ENCODE measurements at regions of chr10 and their contacts with region 1.

Region 1: GRCh38 chr10:120423431-120424197 is 33.4 kb upstream of the PLPP4 start:
- DNase-seq: no peak
- ATAC-seq: peak; percentile 88
- H3K4me3 ChIP-seq: no peak overlapping the region
- H3K27ac ChIP-seq: no peak overlapping the region
- H3K4me1 ChIP-seq: no peaks in the 10 kb centered on the region
- H3K27me3 ChIP-seq: peaks cover 0 to 3% of the 10 kb centered on the region in 2 experiments; a peak in 2 of 4 replicates
- CTCF ChIP-seq: peak; percentile 88 to 95 (median 91)
- EP300 ChIP-seq: no peak
- POLR2A ChIP-seq: no peak
- RAD21 ChIP-seq: peak; percentile 92

Region 2: DNA sequence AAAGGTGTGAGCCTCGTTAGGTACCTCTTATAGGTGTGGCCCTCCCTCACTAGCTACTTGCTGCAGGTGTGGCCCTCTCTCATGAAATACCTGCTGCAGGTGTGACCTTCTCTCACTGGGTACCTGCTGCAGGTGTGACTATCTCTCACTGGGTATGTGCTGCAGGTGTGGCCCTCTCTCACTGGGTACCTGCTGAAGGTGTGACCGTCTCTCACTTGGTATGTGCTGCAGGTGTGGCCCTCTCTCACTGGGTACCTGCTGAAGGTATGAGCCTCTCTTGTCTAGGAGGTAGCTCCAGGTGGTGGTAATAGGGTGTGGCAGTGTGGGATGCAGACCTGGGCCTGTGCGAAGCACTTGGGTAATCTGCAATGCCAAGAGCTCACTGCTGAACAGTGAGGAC is 137.3 kb before region 1 on chr10:
- CTCF ChIA-PET with region 1: no interaction called
- POLR2A ChIA-PET with region 1: no interaction called
- RAD21 ChIA-PET with region 1: no interaction called
- SMC1A ChIA-PET with region 1: no interaction called
- in situ Hi-C with region 1: no loop called
- intact Hi-C with region 1: no loop called
- DNase-seq: no peak
- ATAC-seq: no peak
- H3K4me3 ChIP-seq: no peak overlapping the region
- H3K27ac ChIP-seq: no peak overlapping the region
- H3K4me1 ChIP-seq: no peaks in the 10 kb centered on the region
- H3K27me3 ChIP-seq: no peaks in the 10 kb centered on the region
- CTCF ChIP-seq: no peak
- EP300 ChIP-seq: no peak
- POLR2A ChIP-seq: no peak
- RAD21 ChIP-seq: no peak

Region 3: GRCh38 chr10:120600871-120601649 is 177.4 kb after region 1 on chr10:
- CTCF ChIA-PET with region 1: interaction called, 11 read pairs
- POLR2A ChIA-PET with region 1: no interaction called
- RAD21 ChIA-PET with region 1: interaction called, 6 read pairs
- SMC1A ChIA-PET with region 1: interaction called, 5 read pairs
- in situ Hi-C with region 1: no loop called
- intact Hi-C with region 1: loop called (anchors 5 kb)
- DNase-seq: no peak
- ATAC-seq: peak; percentile 60
- H3K4me3 ChIP-seq: no peak overlapping the region
- H3K27ac ChIP-seq: no peak overlapping the region
- H3K4me1 ChIP-seq: peaks cover 6% of the 10 kb centered on the region
- H3K27me3 ChIP-seq: peaks cover 0 to 2% of the 10 kb centered on the region in 2 experiments; a peak in 2 of 4 replicates
- CTCF ChIP-seq: 0 out of 6 replicates have a peak, but pooled peaks have one; percentile 9 to 16 (median 14)
- EP300 ChIP-seq: no peak
- POLR2A ChIP-seq: no peak
- RAD21 ChIP-seq: 0 out of 2 replicates have a peak, but pooled peaks have one; percentile 7

Region 4: DNA sequence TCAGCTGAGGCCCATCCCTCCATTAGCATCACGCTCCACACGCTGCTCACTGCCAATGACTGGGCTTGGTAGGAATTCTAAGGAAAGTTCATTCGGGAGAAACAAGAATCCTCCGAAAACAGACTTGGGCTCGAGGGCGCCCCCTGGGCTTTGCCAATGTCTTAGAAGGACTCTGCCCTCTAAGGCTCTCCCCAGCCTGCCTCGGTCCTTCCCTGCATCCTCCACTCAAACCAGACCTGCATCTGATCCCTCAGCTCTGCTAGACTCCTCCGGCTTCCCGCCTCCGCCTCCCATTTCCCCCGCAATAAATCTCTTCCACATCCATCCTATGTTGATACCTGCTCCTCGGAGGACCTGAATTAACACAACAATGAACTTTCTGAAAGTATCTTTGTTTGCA is 211.0 kb after region 1 on chr10:
- CTCF ChIA-PET with region 1: interaction called, 10 read pairs
- POLR2A ChIA-PET with region 1: no interaction called
- RAD21 ChIA-PET with region 1: no interaction called
- SMC1A ChIA-PET with region 1: no interaction called
- in situ Hi-C with region 1: no loop called
- intact Hi-C with region 1: no loop called
- DNase-seq: no peak
- ATAC-seq: no peak
- H3K4me3 ChIP-seq: no peak overlapping the region
- H3K27ac ChIP-seq: no peak overlapping the region
- H3K4me1 ChIP-seq: no peaks in the 10 kb centered on the region
- H3K27me3 ChIP-seq: no peaks in the 10 kb centered on the region
- CTCF ChIP-seq: peak; percentile 3 to 17 (median 15); a peak in 1 of 6 replicates
- EP300 ChIP-seq: no peak
- POLR2A ChIP-seq: no peak
- RAD21 ChIP-seq: no peak

Region 5: GRCh38 chr10:120735773-120736371 is 312.3 kb after region 1 on chr10:
- CTCF ChIA-PET with region 1: interaction called, 64 read pairs
- POLR2A ChIA-PET with region 1: no interaction called
- RAD21 ChIA-PET with region 1: interaction called, 34 read pairs
- SMC1A ChIA-PET with region 1: interaction called, 14 read pairs
- in situ Hi-C with region 1: loop called (anchors 5 kb)
- intact Hi-C with region 1: loop called (anchors 1 kb)
- DNase-seq: peak; percentile 7
- ATAC-seq: peak; percentile 85
- H3K4me3 ChIP-seq: no peak overlapping the region
- H3K27ac ChIP-seq: no peak overlapping the region
- H3K4me1 ChIP-seq: no peaks in the 10 kb centered on the region
- H3K27me3 ChIP-seq: no peaks in the 10 kb centered on the region
- CTCF ChIP-seq: peak; percentile 55 to 68 (median 56)
- EP300 ChIP-seq: no peak
- POLR2A ChIP-seq: no peak
- RAD21 ChIP-seq: peak; percentile 62

Measured in GM12878 (cell line).